Sigmoid colon (tissue), 7 donors: ENCODE measurements at regions of chr6 and their contacts with region 1.

Region 1: GRCh38 chr6:139881728-139882211 is 507.3 kb upstream of the CITED2 start:
- DNase-seq: no peak
- H3K4me3 ChIP-seq: no peak overlapping the region
- H3K27ac ChIP-seq: peak overlapping the region in 3 of 4 donors; percentile 33 to 72 (median 53)
- H3K4me1 ChIP-seq: peaks cover 0 to 21% (median 17%) of the 10 kb centered on the region in 4 donors
- H3K27me3 ChIP-seq: no peaks in the 10 kb centered on the region
- CTCF ChIP-seq: peak in 3 of 4 experiments; percentile 19 to 42 (median 31)
- EP300 ChIP-seq: no peak
- POLR2A ChIP-seq: no peak

Region 2: GRCh38 chr6:139124887-139125672 is 756.7 kb before region 1 on chr6:
- intact Hi-C with region 1: no loop called
- DNase-seq: peak; percentile 72
- H3K4me3 ChIP-seq: no peak overlapping the region
- H3K27ac ChIP-seq: no peak overlapping the region
- H3K4me1 ChIP-seq: no peaks in the 10 kb centered on the region
- H3K27me3 ChIP-seq: no peaks in the 10 kb centered on the region
- CTCF ChIP-seq: peak in 1 of 4 experiments; percentile 22
- EP300 ChIP-seq: peak in 1 of 4 donors; percentile 7
- POLR2A ChIP-seq: no peak

Region 3: DNA sequence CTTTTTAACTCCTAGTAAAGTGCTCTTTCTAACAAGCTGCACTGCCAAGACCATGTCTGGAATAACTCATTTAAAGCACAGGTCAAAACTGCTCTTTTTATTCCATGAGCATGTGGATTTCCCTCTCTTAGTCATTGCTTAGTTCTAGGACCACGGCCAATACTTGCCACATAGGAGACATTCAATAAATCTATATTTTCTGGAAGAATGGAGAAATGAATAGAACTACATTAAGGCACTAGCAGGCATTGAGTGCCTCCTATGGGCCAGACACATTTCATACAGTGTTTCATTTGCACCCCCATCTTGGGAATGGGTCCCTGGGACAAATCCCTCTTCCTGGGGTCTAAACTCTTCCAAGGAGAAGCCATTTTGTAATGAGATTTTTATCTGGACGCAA is 45.5 kb after region 1 on chr6:
- intact Hi-C with region 1: no loop called
- DNase-seq: no peak
- H3K4me3 ChIP-seq: no peak overlapping the region
- H3K27ac ChIP-seq: no peak overlapping the region
- H3K4me1 ChIP-seq: peaks cover 0 to 10% (median 3%) of the 10 kb centered on the region in 4 donors
- H3K27me3 ChIP-seq: no peaks in the 10 kb centered on the region
- CTCF ChIP-seq: no peak
- EP300 ChIP-seq: no peak
- POLR2A ChIP-seq: no peak

Region 4: GRCh38 chr6:139968993-139969392 is 87.2 kb after region 1 on chr6:
- intact Hi-C with region 1: no loop called
- DNase-seq: no peak
- H3K4me3 ChIP-seq: no peak overlapping the region
- H3K27ac ChIP-seq: no peak overlapping the region
- H3K4me1 ChIP-seq: peaks cover 0 to 41% (median 22%) of the 10 kb centered on the region in 4 donors
- H3K27me3 ChIP-seq: no peaks in the 10 kb centered on the region
- CTCF ChIP-seq: no peak
- EP300 ChIP-seq: no peak
- POLR2A ChIP-seq: no peak

Region 5: DNA sequence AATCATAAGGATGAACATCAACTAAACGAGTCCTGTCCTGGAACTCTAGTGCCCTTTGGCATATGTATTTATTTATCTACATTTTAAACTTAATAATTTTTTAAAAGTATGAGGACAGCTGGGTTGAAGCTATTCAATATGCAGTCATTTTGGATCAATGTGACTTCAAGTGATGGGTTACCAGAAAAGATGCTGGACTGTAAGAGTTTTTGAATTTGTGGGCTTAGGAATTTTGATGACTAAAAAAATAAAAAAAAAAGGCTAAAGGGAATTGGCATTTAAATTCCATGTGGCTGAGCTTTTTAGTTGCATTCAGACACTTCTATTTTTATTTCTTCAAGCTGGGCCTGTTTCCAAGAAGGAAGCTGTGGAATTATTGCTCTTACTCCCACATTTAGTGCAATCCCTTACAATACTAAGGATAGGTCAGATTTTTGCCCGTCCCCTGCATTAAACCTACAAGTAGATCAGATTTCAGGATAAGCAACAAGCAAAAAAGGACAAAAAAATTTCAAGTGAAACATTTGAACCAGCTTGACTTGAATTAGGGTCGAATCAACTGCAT is 196.9 kb after region 1 on chr6:
- intact Hi-C with region 1: loop called (anchors 10 kb)
- DNase-seq: no peak
- H3K4me3 ChIP-seq: no peak overlapping the region
- H3K27ac ChIP-seq: peak overlapping the region; percentile 37 to 69 (median 51)
- H3K4me1 ChIP-seq: peaks cover 0 to 43% (median 32%) of the 10 kb centered on the region in 4 donors
- H3K27me3 ChIP-seq: no peaks in the 10 kb centered on the region
- CTCF ChIP-seq: no peak
- EP300 ChIP-seq: no peak
- POLR2A ChIP-seq: no peak

Region 6: GRCh38 chr6:140174515-140174914 is 292.7 kb after region 1 on chr6:
- intact Hi-C with region 1: no loop called
- DNase-seq: no peak
- H3K4me3 ChIP-seq: no peak overlapping the region
- H3K27ac ChIP-seq: no peak overlapping the region
- H3K4me1 ChIP-seq: no peaks in the 10 kb centered on the region
- H3K27me3 ChIP-seq: no peaks in the 10 kb centered on the region
- CTCF ChIP-seq: no peak
- EP300 ChIP-seq: no peak
- POLR2A ChIP-seq: no peak